AG04449 (cell line): ENCODE measurements at regions of chr2 and their contacts with region 1.

Region 1: DNA sequence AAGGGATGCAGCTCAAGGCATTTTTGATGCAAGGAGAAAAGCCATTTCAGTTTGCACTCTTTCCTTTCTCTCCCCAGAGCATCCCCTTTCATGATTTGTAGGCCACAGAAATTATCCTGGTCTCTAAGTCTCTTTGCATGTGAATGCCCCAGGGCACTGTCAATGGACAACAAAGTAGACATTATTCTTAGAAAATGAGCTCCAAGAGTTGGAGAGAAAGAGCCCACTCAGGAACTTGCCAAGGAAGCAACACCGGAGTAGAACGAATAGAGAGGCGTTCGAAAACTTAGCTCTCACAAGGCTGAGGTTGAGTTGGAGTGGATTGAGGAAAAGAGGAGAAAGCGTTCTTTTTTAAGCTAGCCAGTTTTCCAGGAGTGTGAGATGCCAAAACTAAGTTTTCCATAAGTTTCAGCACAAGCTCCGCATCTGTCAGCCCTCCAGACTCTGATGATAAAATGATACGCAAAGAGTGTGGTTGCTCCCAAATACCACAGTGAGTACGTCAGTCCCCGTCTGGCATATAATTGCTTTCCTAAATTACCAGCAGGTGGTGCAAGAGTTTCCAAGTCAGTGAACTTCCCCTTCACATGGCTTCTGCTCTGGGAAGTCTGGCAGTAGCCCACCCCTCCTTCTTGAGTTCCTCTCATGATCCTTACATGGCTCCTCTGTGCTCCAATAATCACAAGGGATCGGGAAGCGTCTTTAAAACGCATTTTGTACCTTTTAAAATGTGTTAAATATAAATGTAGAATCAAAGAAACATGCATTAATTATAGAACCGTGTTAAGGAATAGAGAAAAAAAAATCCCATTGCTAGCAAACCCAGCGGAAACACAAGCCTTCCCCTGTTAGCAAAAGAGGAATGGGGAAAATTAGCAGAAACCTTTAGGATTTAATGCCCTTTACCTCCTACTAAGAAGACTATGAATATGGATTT is 1060.6 kb upstream of the FANCL start:
- DNase-seq: peak; percentile 31
- H3K4me3 ChIP-seq: no peak overlapping the region
- CTCF ChIP-seq: peak; percentile 55

Region 2: DNA sequence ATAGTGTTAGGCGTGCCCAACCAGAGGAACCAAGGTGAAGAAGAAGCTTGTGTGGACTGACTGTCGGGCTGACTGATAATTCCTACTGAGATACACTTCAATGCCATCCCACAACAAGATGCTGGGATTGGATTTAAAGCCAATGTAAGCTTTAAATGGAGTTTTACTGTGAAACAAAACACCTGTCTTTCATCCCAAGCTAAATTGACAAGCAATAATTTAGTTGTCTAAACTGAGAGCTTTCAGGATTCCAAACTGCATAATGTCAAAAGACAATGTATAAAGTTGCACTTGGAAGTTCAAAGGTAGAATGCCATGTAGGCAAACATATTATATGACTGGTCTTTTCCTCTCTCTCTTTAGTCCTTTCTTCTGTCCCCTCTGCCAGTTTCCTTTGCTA is 35.3 kb before region 1 on chr2:
- CTCF ChIA-PET with region 1: no interaction called
- POLR2A ChIA-PET with region 1: no interaction called
- DNase-seq: no peak
- H3K4me3 ChIP-seq: no peak overlapping the region
- CTCF ChIP-seq: no peak

Region 3: DNA sequence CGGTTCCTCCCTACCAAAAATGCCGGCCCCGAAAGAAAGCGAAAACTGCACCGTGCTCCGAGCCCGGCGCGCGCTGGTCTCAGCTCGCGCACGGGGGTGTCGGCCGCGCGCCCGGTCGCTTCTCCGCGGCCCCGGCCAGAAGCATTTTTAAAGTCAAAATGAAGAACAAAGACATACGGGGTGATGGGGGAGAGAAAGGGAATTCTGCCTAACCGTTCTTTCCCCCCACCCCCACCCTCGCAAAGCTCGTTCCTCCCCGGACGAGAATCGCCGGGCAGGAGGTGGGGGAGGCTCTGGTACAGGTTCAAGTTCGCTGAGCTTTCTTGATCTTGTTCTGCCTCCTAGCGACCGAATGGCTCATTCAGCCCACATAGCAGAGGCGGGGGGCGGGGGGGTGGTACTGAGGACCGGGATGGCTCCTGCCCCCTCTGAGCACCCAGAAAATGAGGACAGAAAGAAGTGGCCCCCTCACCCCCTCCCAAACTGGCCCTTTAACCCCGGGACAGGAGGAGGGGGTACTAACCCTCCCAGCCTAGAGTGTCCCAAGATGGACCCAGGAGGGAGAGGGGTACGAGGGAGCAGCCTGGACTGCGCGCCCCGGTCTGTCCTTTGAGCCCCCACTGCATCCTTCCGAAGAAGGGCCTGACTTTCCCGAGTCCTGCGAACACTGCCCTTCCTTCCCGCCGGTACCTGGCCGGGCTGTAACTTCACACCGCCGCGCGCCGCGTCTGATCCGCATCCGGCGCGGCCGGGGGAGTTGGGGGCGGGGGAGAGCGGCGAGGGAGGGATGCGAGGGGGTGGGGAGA is 1248.6 kb after region 1 on chr2:
- CTCF ChIA-PET with region 1: interaction called, 17 read pairs
- POLR2A ChIA-PET with region 1: no interaction called
- DNase-seq: peak; percentile 47
- H3K4me3 ChIP-seq: peak overlapping the region; percentile 75
- CTCF ChIP-seq: peak; percentile 85

Region 4: DNA sequence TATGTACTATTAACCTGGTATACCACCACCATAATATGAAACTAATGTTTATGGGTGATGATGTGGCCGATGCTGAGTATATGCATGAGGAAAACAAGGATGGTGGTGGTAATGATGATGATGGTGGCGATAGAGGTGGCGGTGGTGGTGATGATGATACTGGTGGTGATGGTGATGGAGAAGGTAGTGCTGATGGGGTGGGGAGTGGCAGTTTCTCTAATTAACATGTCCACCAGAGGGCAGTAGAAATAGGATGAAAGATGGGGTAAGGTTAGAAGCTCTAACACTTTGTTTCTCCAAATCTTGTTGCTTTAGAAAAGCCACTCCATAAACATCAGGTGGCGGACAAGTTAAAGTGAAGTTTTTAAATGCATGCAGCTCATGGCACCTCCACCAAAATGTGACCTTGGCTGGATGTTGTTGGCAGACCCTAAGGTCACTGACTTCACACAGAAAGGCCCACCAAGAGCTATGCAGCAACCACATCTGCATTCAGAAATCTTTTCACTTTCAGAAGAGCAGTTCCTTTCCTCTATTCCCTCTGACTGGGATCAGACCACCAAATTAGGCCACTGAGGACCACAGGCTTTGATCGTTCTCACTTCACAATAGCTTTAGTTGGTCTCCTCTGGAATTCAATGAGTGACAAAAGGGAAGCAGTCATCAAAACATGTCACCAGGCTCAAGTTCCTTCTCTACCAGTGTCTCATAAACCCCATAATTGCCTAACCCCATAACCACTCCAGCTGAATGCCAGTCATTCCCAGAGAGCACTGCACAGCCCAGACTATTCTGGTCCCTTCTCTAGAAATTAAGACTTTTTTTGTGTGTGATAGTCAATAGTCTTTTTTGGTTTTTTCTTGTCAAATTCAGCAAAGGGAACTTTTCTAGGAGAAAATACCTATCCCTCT is 1259.3 kb after region 1 on chr2:
- CTCF ChIA-PET with region 1: interaction called, 11 read pairs
- POLR2A ChIA-PET with region 1: no interaction called
- DNase-seq: no peak
- H3K4me3 ChIP-seq: no peak overlapping the region
- CTCF ChIP-seq: peak; percentile 53